ENCODE measurements at regions of chr20 and their contacts with region 1.

Region 1: DNA sequence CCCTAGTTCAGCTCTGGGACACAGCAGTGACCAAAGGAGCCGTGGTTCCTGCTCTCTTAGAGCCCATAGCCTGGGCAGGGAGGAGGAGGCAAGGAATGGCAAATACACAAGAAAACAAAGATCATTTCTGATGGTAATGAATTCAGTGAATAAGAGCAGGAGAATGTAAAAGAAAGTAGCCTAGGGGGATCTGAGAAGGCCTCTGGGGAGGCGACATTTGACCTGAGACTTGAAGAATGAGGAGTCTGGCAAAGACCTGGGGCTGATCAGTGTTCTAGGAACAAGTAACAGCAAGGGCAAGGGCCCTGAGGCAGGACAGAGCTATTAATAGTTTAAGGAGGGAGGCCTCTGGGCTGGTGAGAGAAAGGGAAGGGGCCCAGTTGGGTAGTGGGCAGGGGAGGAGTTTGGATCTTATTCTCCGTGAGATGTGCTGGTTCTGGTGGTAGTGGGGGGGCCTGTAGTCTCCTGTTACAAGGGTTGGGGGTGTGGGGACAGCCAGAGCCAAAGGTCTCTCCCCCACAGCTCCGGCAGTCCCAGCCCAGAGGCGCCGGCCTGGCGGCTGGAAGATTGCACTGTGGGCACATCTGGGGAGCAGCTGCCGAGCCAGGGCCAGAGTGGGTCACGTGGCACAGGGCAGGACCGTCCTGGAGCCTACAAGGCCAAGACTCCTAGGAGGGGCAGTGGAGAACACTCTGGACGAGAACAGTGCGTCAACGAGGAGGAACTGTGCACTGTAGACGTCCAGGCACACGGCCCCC is 9.3 kb upstream of the ID1 start:
- DNase-seq: peak; percentile 92
- H3K4me3 Mint-ChIP-seq: peak overlapping the region; percentile 43
- H3K27ac Mint-ChIP-seq: peak overlapping the region; percentile 94
- H3K4me1 Mint-ChIP-seq: peaks cover 28% of the 10 kb centered on the region
- H3K27me3 Mint-ChIP-seq: no peaks in the 10 kb centered on the region
- CTCF ChIP-seq: no peak

Region 2: GRCh38 chr20:31578448-31579138 is 17.2 kb before region 1 on chr20:
- CTCF ChIA-PET with region 1: interaction called, 1,902 read pairs
- POLR2A ChIA-PET with region 1: interaction called, 1,321 read pairs
- intact Hi-C with region 1: loop called (anchors 1 kb)
- DNase-seq: no peak
- H3K4me3 Mint-ChIP-seq: no peak overlapping the region
- H3K27ac Mint-ChIP-seq: no peak overlapping the region
- H3K4me1 Mint-ChIP-seq: peaks cover 8% of the 10 kb centered on the region
- H3K27me3 Mint-ChIP-seq: no peaks in the 10 kb centered on the region
- CTCF ChIP-seq: no peak

Region 3: GRCh38 chr20:31661625-31662371 is 66.0 kb after region 1 on chr20:
- CTCF ChIA-PET with region 1: no interaction called
- POLR2A ChIA-PET with region 1: no interaction called
- intact Hi-C with region 1: no loop called
- DNase-seq: peak; percentile 71
- H3K4me3 Mint-ChIP-seq: peak overlapping the region; percentile 58
- H3K27ac Mint-ChIP-seq: no peak overlapping the region
- H3K4me1 Mint-ChIP-seq: peaks cover 19% of the 10 kb centered on the region
- H3K27me3 Mint-ChIP-seq: no peaks in the 10 kb centered on the region
- CTCF ChIP-seq: peak; percentile 75